Right ventricle myocardium inferior (tissue), 1 donor: ENCODE measurements at regions of chr6 and their contacts with region 1.

Region 1: DNA sequence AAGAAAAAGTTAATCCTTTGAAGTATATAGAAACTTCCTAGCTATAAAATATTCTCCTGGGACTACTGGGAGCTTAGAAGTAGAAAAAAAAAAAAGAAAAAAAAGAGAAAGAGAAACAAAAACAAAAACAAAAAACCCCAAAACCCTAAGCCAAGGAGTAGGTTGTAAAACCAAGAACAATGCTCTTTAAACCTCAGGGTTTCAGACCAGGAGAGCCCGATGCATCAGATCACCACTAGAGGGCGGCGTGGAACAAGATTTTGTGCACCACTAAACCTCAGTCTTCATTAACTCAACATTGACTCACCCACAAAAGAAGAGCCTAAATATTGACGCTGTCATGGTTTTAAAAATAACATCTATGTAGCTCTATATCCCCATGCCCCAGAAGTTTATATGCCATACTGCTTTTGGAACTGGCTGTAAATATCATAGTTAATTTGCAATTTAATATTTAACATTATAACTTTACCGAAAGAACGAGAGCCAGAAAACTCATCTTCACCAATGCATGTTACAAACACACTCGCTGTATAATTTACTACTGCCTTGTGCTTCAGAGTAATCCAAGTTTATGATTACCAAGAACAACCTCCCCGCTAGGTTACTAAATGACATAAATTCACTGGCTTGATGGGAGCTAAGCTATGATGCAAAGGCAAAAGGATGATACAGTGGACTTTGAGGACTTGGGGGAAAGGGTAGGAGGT is 19.2 kb downstream of the MCUR1 start:
- DNase-seq: peak; percentile 80
- ATAC-seq: peak; percentile 68

Region 2: GRCh38 chr6:13859871-13860555 is 64.8 kb after region 1 on chr6:
- intact Hi-C with region 1: no loop called
- DNase-seq: no peak
- ATAC-seq: peak; percentile 20

Region 3: DNA sequence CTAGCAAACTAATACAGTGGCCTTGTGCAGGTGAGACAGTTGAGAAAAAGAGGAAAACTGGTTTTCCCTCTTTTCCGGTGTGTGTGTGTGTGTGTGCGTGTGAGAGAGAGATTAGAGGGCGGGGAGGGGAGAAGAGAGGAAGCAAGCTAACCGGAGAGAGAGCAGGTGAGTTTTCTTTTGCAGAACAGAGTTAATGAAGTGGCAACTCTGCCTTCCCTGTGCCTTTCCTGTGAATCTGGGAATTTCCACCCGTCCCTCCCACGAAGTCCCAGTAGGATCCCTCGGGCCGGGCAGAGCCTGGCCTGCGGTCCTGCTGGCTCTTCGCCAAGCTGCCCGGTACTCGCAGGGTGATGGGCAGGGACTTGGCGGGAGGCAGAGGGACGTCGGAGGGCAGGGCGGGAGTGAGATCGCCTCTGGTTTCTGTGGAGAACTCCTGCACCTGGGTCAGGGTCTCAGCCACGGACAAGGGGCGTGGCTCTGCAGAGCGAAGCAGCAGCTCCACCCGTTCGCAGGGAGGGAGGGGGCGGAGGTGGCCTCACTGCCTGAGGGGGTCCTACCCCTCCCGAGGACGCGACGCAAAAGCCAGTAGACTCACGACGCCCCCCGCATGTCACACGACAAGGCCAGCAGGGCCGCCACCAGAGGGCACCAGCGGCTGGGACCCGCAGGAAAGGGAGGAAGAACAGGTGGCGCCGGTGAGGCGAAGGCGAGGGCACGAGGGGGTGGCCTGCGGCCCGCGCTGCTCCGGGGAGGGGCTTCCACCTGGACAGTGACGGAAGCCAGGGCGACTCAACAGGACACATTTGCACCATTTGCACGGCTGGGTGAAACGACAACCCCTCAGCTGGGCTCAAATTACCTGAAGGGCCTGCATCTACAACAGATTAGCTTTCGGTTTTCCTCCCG is 78.3 kb after region 1 on chr6:
- intact Hi-C with region 1: loop called (anchors 10 kb)
- DNase-seq: peak; percentile 74
- ATAC-seq: peak; percentile 52

Region 4: GRCh38 chr6:14066782-14067406 is 271.7 kb after region 1 on chr6:
- intact Hi-C with region 1: loop called (anchors 5 kb)
- DNase-seq: no peak
- ATAC-seq: peak; percentile 44

Region 5: GRCh38 chr6:14165091-14165490 is 369.9 kb after region 1 on chr6:
- intact Hi-C with region 1: no loop called
- DNase-seq: no peak
- ATAC-seq: no peak